ENCODE measurements at regions of chr3 and their contacts with region 1.

Region 1: DNA sequence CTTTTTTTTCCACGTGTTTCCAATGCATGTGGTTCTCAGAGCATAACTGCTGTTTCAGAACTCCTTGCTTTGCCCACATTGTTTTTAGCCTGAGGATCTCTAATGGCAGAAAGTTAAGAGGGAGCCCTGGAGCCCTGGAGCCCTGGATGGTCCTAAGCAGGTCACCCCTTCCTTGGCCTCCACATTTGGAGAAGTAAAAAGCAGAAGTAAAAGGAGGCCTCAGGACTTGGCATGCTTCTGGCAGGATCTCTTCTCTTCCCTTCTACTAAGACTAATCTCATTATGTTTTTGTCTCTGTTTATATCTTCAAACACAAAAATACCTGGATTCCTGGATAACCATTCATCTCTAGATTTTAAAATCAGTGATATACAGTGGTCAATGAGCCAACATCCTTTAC is 50.1 kb downstream of the P2RY1 start:
- DNase-seq: no peak
- H3K4me3 ChIP-seq: no peak overlapping the region
- H3K27ac ChIP-seq: no peak overlapping the region
- H3K4me1 ChIP-seq: no peaks in the 10 kb centered on the region
- H3K27me3 ChIP-seq: no peaks in the 10 kb centered on the region
- CTCF ChIP-seq: no peak

Region 2: GRCh38 chr3:154120961-154121700 is 1236.1 kb after region 1 on chr3 and contains the start of gene ARHGEF26:
- CTCF ChIA-PET with region 1: no interaction called
- POLR2A ChIA-PET with region 1: interaction called, 11 read pairs
- intact Hi-C with region 1: no loop called
- DNase-seq: peak; percentile 83
- H3K4me3 ChIP-seq: peak within 1 kb of the TSS; percentile 66
- H3K27ac ChIP-seq: peak within 1 kb of the TSS; percentile 61
- H3K4me1 ChIP-seq: peaks cover 17% of the 10 kb centered on the region
- H3K27me3 ChIP-seq: no peaks in the 10 kb centered on the region
- CTCF ChIP-seq: no peak
- total RNA-seq, gene ARHGEF26: 15.9 and 20.7 TPM in 2 replicates